Cardiac septum (tissue), 1 donor: ENCODE measurements at regions of chr13 and their contacts with region 1.

Region 1: GRCh38 chr13:60396783-60397703 is at the start of gene TDRD3:
- DNase-seq: peak; percentile 91
- total RNA-seq, gene TDRD3: 47.8 TPM

Region 2: DNA sequence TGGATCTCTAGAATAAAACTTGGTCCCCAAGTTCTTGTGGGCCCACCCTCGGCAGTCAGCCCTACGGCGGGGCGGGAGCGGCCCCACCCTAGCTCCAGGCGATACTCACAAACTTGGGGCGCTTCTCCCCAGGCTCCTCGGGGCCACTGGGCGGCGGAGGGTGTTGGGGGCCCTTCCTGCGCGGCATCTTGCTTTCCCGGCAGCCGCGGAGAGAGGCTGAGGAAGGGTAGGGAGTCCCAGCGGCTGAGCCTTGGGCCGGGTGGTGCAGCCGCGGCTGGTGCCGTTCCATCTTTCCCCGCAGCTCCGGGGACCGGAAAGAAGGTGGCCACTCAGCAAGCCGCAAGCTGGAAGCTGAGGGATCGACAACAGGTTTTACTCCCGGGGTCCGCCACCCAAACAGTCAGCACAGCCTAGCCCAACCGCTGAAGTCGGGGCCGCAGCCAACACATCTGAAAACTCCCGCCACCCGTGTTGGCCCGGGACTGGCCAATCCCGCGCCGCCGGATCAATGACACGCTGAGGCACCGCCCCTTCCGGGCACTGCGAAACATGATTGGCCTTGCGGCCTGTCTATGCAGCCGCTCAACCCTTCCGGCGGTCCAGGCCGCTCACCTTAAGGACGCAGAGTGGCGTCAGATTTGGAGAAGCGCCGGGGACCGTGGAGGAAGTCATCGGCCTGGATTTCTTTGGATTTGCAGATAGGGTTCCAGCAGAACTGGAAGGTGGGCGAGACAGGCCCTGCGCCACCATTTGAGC is 233.4 kb before region 1 on chr13 and contains the start of gene DIAPH3:
- intact Hi-C with region 1: loop called (anchors 10 kb)
- DNase-seq: peak; percentile 97
- total RNA-seq, gene DIAPH3: 0.38 TPM